Transverse colon (tissue), 4 donors: ENCODE measurements at regions of chr20 and their contacts with region 1.

Region 1: DNA sequence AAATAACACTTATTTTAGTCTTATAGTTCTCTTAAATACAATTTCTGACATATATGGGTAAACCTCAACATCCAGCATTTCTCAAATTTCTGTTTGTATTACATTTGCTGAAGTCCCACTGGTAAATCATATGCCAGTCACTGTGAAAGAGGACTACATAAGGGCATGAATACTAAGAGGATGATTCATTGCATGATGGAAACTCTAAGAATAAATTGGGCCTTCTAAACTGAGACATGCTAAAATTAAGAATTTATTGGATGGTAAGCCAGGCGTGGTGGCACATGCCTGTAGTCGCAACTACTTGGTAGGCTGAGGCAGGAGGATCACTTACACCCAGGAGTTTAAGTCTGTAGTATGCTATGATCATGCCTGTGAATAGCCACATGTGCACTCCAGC is 12.1 kb downstream of the DEFB123 start:
- DNase-seq: no peak
- H3K4me3 ChIP-seq: no peak overlapping the region
- H3K27ac ChIP-seq: no peak overlapping the region
- H3K4me1 ChIP-seq: no peaks in the 10 kb centered on the region
- H3K27me3 ChIP-seq: peaks cover 4% of the 10 kb centered on the region
- CTCF ChIP-seq: no peak
- EP300 ChIP-seq: no peak
- POLR2A ChIP-seq: no peak

Region 2: GRCh38 chr20:31496761-31497295 is 44.3 kb after region 1 on chr20:
- in situ Hi-C with region 1: loop called in 1 of 4 experiments (anchors 5 kb)
- intact Hi-C with region 1: no loop called
- DNase-seq: peak; percentile 22
- H3K4me3 ChIP-seq: no peak overlapping the region
- H3K27ac ChIP-seq: peak overlapping the region; percentile 45 to 66 (median 55)
- H3K4me1 ChIP-seq: peaks cover 0 to 8% (median 0%) of the 10 kb centered on the region in 4 donors
- H3K27me3 ChIP-seq: no peaks in the 10 kb centered on the region
- CTCF ChIP-seq: no peak
- EP300 ChIP-seq: no peak
- POLR2A ChIP-seq: no peak